ENCODE measurements at regions of chr10 and their contacts with region 1.

Region 1: GRCh38 chr10:6416892-6417512 is 163.1 kb downstream of the PRKCQ start:
- DNase-seq: no peak
- ATAC-seq: peak; percentile 63 to 73

Region 2: DNA sequence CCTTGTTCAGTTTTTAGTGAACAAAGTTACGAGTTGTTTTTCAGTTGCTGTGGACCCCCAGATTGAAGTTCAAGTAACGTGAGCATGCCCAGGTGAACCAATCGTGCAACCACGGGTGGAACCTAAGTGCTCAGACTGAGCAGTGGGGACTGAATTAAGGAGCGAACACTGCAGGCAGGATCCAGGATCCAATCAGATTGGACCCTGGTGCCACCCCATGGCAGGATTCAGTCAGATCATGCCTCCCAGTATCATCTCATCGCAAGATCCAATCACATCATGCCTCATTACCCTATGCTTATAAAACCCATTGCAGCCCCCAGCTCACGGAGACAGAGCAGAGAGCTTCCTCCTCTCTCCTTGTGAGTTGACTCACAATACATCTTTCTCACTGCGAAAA is 133.3 kb before region 1 on chr10:
- intact Hi-C with region 1: no loop called
- DNase-seq: no peak
- ATAC-seq: no peak

Region 3: GRCh38 chr10:6667679-6668270 is 250.8 kb after region 1 on chr10:
- intact Hi-C with region 1: loop called (anchors 10 kb)
- DNase-seq: no peak
- ATAC-seq: no peak

Measured in left cardiac atrium (tissue), 4 donors.